Psoas muscle (tissue), 8 donors: ENCODE measurements at regions of chr7 and their contacts with region 1.

Region 1: DNA sequence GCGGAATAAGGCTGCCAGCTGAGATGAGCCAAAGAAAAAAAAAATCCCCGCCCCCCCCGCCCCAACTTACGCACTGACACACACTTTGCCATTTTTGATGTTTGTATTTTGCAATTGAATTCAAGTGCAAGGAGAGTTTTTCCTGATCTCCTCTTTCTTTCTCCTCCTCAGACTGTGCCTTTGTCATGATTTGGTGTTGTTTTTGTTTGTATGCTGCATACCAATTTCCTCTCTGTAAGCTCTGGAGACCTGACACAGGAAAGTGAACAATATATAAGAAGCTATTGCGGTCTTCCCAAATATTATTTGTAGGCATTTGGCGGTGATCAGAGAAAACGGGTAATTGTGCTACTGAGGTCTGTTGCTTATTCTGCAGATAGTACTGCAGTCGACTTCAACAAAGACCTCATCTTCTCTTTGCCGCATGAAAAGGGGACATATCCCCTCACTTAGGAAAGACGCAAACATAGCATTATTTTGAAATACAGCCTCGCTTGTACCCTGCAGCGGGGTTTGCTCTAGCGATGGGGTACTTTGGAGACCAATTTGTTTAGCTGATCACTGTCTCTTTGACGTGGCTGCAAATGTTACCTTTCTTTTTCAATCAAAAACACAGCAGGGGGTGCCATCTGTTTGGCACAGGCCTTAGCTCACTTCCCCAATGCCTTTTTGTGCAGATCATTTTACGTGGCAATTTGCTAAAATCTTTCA is 206.5 kb downstream of the SKAP2 start:
- DNase-seq: no peak
- ATAC-seq: no peak
- H3K4me3 ChIP-seq: no peak overlapping the region
- H3K27ac ChIP-seq: no peak overlapping the region
- H3K4me1 ChIP-seq: no peaks in the 10 kb centered on the region
- H3K27me3 ChIP-seq: peaks cover 0 to 8% (median 0%) of the 10 kb centered on the region in 3 donors
- CTCF ChIP-seq: no peak

Region 2: DNA sequence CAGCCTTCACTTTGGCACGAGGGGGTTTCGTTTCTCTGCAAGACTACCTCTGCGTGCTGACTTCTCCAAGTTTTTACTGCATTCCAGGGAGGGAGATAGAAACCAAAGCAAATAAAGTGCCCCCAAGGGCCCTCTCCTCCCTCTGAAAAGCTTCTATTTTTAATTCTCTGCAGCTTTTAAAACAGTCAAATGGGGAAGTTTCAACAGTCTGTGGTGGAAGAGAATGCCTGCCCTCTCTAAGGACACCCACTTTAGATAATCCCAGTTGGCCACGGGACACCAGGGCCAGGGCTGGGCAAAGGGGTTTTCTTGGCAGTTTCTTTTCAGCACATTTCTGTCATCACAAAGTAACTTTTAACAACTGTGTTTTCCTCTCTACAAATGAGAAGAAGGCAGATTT is 1042.8 kb before region 1 on chr7:
- intact Hi-C with region 1: no loop called
- DNase-seq: no peak
- ATAC-seq: no peak
- H3K4me3 ChIP-seq: no peak overlapping the region
- H3K27ac ChIP-seq: no peak overlapping the region
- H3K4me1 ChIP-seq: peaks cover 9% of the 10 kb centered on the region
- H3K27me3 ChIP-seq: no peaks in the 10 kb centered on the region
- CTCF ChIP-seq: no peak

Region 3: GRCh38 chr7:26090927-26091519 is 566.8 kb before region 1 on chr7:
- intact Hi-C with region 1: loop called in 1 of 2 experiments (anchors 5 kb)
- DNase-seq: no peak
- ATAC-seq: peak in 2 of 4 donors; percentile 57 to 82
- H3K4me3 ChIP-seq: no peak overlapping the region
- H3K27ac ChIP-seq: no peak overlapping the region
- H3K4me1 ChIP-seq: no peaks in the 10 kb centered on the region
- H3K27me3 ChIP-seq: no peaks in the 10 kb centered on the region
- CTCF ChIP-seq: peak; percentile 73

Region 4: GRCh38 chr7:26549281-26549943 is 108.4 kb before region 1 on chr7:
- intact Hi-C with region 1: no loop called
- DNase-seq: no peak
- ATAC-seq: peak in 3 of 4 donors; percentile 40 to 82 (median 65)
- H3K4me3 ChIP-seq: no peak overlapping the region
- H3K27ac ChIP-seq: no peak overlapping the region
- H3K4me1 ChIP-seq: no peaks in the 10 kb centered on the region
- H3K27me3 ChIP-seq: peaks cover 0 to 3% (median 2%) of the 10 kb centered on the region in 3 donors
- CTCF ChIP-seq: no peak

Region 5: GRCh38 chr7:26562841-26563240 is 95.0 kb before region 1 on chr7:
- intact Hi-C with region 1: no loop called
- DNase-seq: no peak
- ATAC-seq: no peak
- H3K4me3 ChIP-seq: no peak overlapping the region
- H3K27ac ChIP-seq: no peak overlapping the region
- H3K4me1 ChIP-seq: no peaks in the 10 kb centered on the region
- H3K27me3 ChIP-seq: peaks cover 0 to 2% (median 0%) of the 10 kb centered on the region in 3 donors
- CTCF ChIP-seq: no peak

Region 6: GRCh38 chr7:26705567-26705966 is 47.7 kb after region 1 on chr7:
- intact Hi-C with region 1: no loop called
- DNase-seq: no peak
- ATAC-seq: no peak
- H3K4me3 ChIP-seq: no peak overlapping the region
- H3K27ac ChIP-seq: no peak overlapping the region
- H3K4me1 ChIP-seq: peaks cover 5% of the 10 kb centered on the region
- H3K27me3 ChIP-seq: no peaks in the 10 kb centered on the region
- CTCF ChIP-seq: no peak